ENCODE measurements at regions of chr5 and their contacts with region 1.

Region 1: DNA sequence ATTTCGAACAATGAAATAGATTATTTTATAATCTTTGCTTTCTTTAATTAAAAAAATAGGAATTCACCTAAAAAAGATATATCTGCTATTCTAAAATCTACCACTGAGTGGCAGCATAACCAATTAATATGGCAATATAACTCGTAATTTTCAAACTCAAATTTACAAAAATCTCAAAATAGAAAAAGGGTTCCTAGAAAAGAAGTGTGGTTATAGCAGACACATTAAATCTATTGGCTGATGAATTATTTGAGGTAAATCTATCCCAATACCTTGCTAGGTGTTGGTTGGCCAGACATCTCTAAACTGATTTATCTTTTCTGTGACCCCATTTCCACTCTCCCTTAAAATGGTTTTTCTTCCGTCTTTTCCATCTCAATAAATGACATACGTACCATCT is 30.2 kb upstream of the NRG2 start:
- DNase-seq: no peak
- H3K4me3 ChIP-seq: no peak overlapping the region
- H3K4me3 Mint-ChIP-seq: no peak overlapping the region
- H3K27ac Mint-ChIP-seq: no peak overlapping the region
- H3K4me1 ChIP-seq: no peaks in the 10 kb centered on the region
- H3K4me1 Mint-ChIP-seq: peaks cover 7% of the 10 kb centered on the region
- H3K27me3 ChIP-seq: no peaks in the 10 kb centered on the region
- H3K27me3 Mint-ChIP-seq: peaks cover 5% of the 10 kb centered on the region
- CTCF ChIP-seq: peak; percentile 31 to 70

Region 2: GRCh38 chr5:140157032-140157803 is 83.9 kb after region 1 on chr5:
- CTCF ChIA-PET with region 1: interaction called, 3 read pairs
- POLR2A ChIA-PET with region 1: no interaction called
- intact Hi-C with region 1: loop called (anchors 1 kb)
- DNase-seq: peak; percentile 83 to 89
- H3K4me3 ChIP-seq: no peak overlapping the region
- H3K4me3 Mint-ChIP-seq: no peak overlapping the region
- H3K27ac Mint-ChIP-seq: no peak overlapping the region
- H3K4me1 ChIP-seq: peaks cover 6% of the 10 kb centered on the region; the same call in 1 of the 2 replicates
- H3K4me1 Mint-ChIP-seq: peaks cover 2% of the 10 kb centered on the region
- H3K27me3 ChIP-seq: no peaks in the 10 kb centered on the region
- H3K27me3 Mint-ChIP-seq: no peaks in the 10 kb centered on the region
- CTCF ChIP-seq: peak; percentile 91 to 96

Region 3: DNA sequence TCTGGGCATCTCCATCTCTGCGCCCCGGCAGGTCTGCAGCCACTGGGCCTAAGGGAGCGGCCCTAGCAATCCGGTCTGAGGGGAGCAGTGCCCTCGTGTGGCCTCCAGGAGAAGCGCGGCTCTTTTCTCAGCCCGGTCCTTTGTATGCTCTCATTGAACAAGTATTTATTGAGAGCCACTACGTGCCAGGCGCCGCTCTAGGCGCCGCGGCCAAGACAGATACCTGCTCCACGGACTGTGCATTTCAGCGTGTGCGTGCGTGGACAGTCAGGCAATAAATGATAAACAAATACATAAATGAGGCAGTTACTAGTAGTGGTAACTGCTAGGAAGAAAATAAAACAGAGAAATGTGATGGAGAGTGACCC is 284.4 kb after region 1 on chr5:
- CTCF ChIA-PET with region 1: no interaction called
- POLR2A ChIA-PET with region 1: no interaction called
- intact Hi-C with region 1: loop called (anchors 10 kb)
- DNase-seq: peak; percentile 88
- H3K4me3 ChIP-seq: no peak overlapping the region; the same call in 1 of the 2 replicates
- H3K4me3 Mint-ChIP-seq: peak overlapping the region; percentile 58
- H3K27ac Mint-ChIP-seq: peak overlapping the region; percentile 87
- H3K4me1 ChIP-seq: peaks cover 26% of the 10 kb centered on the region
- H3K4me1 Mint-ChIP-seq: peaks cover 22% of the 10 kb centered on the region
- H3K27me3 ChIP-seq: no peaks in the 10 kb centered on the region
- H3K27me3 Mint-ChIP-seq: no peaks in the 10 kb centered on the region
- CTCF ChIP-seq: peak; percentile 87 to 96